ENCODE measurements at regions of chr12 and their contacts with region 1.

Region 1: GRCh38 chr12:121005346-121005815 is 10.9 kb downstream of the C12orf43 start:
- DNase-seq: peak; percentile 75
- H3K4me3 Mint-ChIP-seq: no peak overlapping the region
- H3K27ac Mint-ChIP-seq: peak overlapping the region; percentile 1
- H3K4me1 Mint-ChIP-seq: peaks cover 31% of the 10 kb centered on the region
- H3K27me3 Mint-ChIP-seq: no peaks in the 10 kb centered on the region
- CTCF ChIP-seq: peak; percentile 75

Region 2: DNA sequence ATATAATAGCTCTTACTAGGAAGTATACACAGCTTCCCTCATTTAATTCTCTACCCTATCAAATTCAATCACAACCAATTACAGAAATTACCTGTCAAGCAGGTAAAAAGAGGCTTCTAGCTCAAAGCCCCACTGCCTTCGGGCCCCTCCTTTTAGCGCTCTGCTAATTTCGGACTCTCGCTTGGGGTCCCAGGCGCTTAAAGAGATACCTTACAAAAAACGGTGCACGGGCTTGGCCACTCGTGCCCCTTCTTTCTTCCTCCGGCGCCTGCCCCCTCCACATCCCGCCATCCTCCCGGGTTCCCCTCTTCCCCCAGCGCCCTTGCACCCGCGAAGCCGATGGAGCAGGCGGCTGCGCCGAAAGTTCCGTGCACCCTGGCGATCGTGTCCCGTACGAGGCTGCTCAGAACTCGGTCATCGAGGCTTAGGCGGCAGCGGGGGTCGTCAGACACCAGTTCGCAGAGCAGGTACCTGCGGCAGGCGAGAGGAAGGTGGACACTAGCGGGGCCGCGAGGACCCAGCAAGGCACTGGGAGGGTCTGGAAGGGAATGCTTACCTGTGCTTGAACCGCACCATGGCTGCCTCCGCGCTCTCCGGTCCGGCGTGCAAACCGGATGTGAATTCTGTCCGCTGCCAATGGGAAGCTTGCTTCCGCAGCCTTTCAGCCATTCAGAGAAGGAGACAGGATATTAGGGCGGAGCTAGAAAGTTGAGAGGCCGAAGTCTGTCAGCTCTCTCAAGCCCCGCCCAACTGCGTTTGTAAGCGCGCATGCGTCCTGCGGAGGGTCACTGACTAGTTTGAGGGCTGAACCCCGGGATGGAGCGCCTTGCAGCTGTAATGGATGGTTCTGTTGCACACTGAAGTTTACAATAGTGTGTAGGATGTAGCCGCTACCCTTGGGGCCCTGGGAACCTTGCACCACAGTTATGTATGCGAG is 424.3 kb before region 1 on chr12 and contains the start of gene POP5:
- CTCF ChIA-PET with region 1: interaction called, 6 read pairs
- intact Hi-C with region 1: loop called (anchors 1 kb)
- DNase-seq: peak; percentile 97
- H3K4me3 Mint-ChIP-seq: peak within 1 kb of the TSS; percentile 96
- H3K27ac Mint-ChIP-seq: peak within 1 kb of the TSS; percentile 92
- H3K4me1 Mint-ChIP-seq: peaks cover 17% of the 10 kb centered on the region
- H3K27me3 Mint-ChIP-seq: peaks cover 6% of the 10 kb centered on the region
- CTCF ChIP-seq: no peak
- total RNA-seq, gene POP5: 81.0 and 84.4 TPM in 2 replicates

Region 3: GRCh38 chr12:120939523-120939922 is 65.9 kb before region 1 on chr12:
- CTCF ChIA-PET with region 1: interaction called, 14 read pairs
- intact Hi-C with region 1: loop called (anchors 1 kb)
- DNase-seq: no peak
- H3K4me3 Mint-ChIP-seq: no peak overlapping the region
- H3K27ac Mint-ChIP-seq: no peak overlapping the region
- H3K4me1 Mint-ChIP-seq: peaks cover 3% of the 10 kb centered on the region
- H3K27me3 Mint-ChIP-seq: peaks cover 38% of the 10 kb centered on the region
- CTCF ChIP-seq: no peak

Region 4: GRCh38 chr12:120971299-120972179 is 33.8 kb before region 1 on chr12:
- CTCF ChIA-PET with region 1: interaction called, 16 read pairs
- intact Hi-C with region 1: loop called (anchors 5 kb)
- DNase-seq: no peak
- H3K4me3 Mint-ChIP-seq: no peak overlapping the region
- H3K27ac Mint-ChIP-seq: peak overlapping the region; percentile 27
- H3K4me1 Mint-ChIP-seq: peaks cover 19% of the 10 kb centered on the region
- H3K27me3 Mint-ChIP-seq: no peaks in the 10 kb centered on the region
- CTCF ChIP-seq: peak; percentile 38

Region 5: DNA sequence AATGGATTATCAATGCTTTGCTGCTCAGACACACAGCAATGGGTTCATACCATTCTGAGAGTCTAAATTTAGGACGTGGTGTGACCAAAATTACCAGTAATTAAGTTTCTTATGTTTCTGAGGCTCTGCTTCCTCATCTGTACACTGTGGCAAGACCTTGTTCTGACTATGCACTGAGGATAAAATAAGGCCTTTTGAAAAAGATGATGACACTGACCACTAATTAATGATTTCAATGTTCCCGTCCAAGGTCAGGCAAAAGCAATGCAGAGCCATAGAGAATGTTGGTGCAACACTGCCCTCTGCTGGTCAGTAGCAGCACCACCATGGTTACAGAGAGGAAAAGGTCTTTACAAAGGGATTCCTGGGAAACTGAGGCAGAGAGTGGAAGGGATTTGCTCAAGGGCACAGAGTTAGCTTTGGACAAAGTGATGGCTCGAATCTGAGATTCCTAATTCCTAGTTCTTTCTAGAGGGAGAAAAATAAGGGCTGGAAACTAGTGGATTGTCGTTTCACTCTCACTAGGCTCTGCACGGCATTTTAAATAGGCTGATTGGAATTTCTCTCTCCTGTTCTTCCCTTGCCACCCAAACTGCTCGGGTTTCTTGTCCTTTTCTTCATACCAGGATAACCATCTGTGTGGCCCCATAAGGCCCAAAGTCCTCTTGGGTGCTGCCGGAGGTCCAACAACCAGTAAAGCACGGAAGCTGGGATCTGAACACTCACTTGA is 105.0 kb after region 1 on chr12:
- CTCF ChIA-PET with region 1: interaction called, 3 read pairs
- intact Hi-C with region 1: loop called (anchors 5 kb)
- DNase-seq: peak; percentile 72
- H3K4me3 Mint-ChIP-seq: no peak overlapping the region
- H3K27ac Mint-ChIP-seq: peak overlapping the region; percentile 13
- H3K4me1 Mint-ChIP-seq: peaks cover 7% of the 10 kb centered on the region
- H3K27me3 Mint-ChIP-seq: no peaks in the 10 kb centered on the region
- CTCF ChIP-seq: peak; percentile 94

Region 6: DNA sequence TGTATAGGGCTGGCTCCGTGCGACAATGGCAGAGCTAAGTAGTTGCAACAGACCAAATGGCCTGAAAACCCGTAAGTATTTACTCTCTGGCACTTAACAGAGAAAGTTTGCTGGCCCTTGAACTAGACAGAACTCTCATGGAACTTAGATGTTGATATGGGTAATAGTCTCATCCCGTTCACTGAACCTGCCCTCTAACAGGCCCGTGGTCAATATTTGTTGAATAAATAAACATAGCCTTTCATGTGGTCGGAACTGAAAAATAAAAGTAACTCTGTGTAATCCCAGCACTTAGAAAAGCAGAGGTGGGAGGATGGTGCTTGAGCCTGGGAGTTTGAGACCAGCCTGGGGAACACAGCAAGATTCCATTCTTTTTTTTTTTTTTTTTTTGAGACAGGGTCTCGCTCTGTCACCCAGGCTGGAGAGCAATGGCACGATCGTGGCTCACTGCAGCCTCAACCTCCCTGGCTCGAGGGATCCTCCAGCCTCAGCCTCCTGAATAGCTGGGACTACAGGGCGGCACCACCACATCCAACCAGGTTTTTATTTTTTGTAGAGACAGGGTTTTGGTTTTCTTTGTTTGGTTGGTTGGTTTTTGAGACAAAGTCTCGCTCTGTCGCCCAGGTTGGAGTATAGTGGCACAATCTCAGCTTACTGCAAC is 545.7 kb after region 1 on chr12:
- CTCF ChIA-PET with region 1: no interaction called
- intact Hi-C with region 1: no loop called
- DNase-seq: no peak
- H3K4me3 Mint-ChIP-seq: no peak overlapping the region
- H3K27ac Mint-ChIP-seq: no peak overlapping the region
- H3K4me1 Mint-ChIP-seq: no peaks in the 10 kb centered on the region
- H3K27me3 Mint-ChIP-seq: peaks cover 13% of the 10 kb centered on the region
- CTCF ChIP-seq: no peak